Activated CD4-positive, alpha-beta T cell treated with anti-CD3 and anti-CD28 coated beads for 36 hours (primary cell): ENCODE measurements at regions of chr10 and their contacts with region 1.

Region 1: DNA sequence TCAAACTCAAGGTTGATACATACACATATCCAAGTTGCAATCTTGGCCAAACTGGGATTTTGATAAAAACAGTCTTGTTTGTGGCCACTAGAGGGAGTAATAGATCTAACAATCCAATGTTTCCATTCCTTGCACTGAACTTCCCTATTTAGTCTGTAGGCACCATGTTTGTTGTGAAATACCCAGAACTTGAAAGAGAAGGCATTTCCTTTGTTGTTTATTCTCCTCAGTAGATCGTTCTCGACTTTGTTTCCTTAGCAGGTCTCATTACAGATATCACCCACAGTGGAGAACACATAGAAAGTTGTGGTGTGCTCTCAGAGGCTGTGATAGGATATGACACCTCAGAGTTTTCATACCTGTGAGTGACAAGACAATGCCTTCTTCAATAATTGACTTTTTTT is 70.3 kb upstream of the MXI1 start:
- DNase-seq: no peak
- ATAC-seq: peak; percentile 78
- H3K4me3 Mint-ChIP-seq: no peak overlapping the region
- H3K27ac Mint-ChIP-seq: peak overlapping the region; percentile 7
- H3K4me1 Mint-ChIP-seq: peaks cover 34% of the 10 kb centered on the region
- H3K27me3 Mint-ChIP-seq: no peaks in the 10 kb centered on the region

Region 2: GRCh38 chr10:109698086-109698485 is 439.1 kb before region 1 on chr10:
- CTCF ChIA-PET with region 1: no interaction called
- POLR2A ChIA-PET with region 1: no interaction called
- intact Hi-C with region 1: no loop called
- DNase-seq: no peak
- ATAC-seq: no peak
- H3K4me3 Mint-ChIP-seq: no peak overlapping the region
- H3K27ac Mint-ChIP-seq: no peak overlapping the region
- H3K4me1 Mint-ChIP-seq: no peaks in the 10 kb centered on the region
- H3K27me3 Mint-ChIP-seq: no peaks in the 10 kb centered on the region

Region 3: GRCh38 chr10:109883859-109884771 is 253.0 kb before region 1 on chr10:
- CTCF ChIA-PET with region 1: interaction called, 7 read pairs
- POLR2A ChIA-PET with region 1: interaction called, 9 read pairs
- intact Hi-C with region 1: loop called (anchors 1 kb)
- DNase-seq: peak; percentile 73
- ATAC-seq: peak; percentile 71
- H3K4me3 Mint-ChIP-seq: no peak overlapping the region
- H3K27ac Mint-ChIP-seq: no peak overlapping the region
- H3K4me1 Mint-ChIP-seq: peaks cover 10% of the 10 kb centered on the region
- H3K27me3 Mint-ChIP-seq: no peaks in the 10 kb centered on the region

Region 4: DNA sequence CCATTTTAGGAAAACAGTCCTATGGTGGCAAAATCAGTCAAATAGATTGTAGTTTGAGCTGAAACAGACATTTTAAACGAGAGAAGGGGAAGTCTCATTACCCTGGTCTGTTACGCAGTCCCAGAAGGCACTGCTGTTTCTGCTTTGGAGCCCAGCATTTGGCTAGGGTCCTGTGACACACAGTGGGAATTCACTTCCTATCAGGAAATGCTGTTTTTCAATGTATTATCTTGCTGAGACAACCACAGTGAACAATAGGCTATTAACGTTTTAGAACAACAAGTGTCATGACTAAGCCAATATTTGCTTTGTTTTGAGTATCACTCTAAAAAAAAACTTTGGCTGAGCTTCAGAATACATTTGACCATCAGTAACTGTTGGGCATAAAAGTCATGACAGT is 55.2 kb before region 1 on chr10:
- CTCF ChIA-PET with region 1: interaction called, 5 read pairs
- POLR2A ChIA-PET with region 1: no interaction called
- intact Hi-C with region 1: loop called in 1 of 2 experiments (anchors 2 kb)
- DNase-seq: no peak
- ATAC-seq: no peak
- H3K4me3 Mint-ChIP-seq: peak overlapping the region; percentile 26
- H3K27ac Mint-ChIP-seq: peak overlapping the region; percentile 88
- H3K4me1 Mint-ChIP-seq: peaks cover 89% of the 10 kb centered on the region
- H3K27me3 Mint-ChIP-seq: no peaks in the 10 kb centered on the region

Region 5: DNA sequence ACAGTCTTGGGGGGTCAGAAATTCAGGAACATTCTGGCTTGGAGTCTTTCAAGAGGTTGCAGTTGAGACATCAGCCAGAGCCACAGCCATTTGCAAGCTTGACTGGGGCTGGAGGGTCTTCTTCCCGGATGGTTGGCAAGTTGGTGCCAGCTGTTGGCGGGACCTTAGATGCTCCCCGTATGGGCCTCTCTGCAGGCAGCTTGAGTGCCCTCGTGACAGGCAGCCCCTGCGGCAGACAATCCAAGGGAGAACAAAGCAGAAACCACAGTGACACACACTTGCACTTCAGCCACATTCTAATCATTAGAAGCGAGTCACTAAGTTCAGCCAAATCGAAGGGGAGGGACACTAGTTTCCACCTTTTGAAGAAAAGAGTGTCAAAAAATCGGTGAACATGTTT is 10.8 kb after region 1 on chr10:
- CTCF ChIA-PET with region 1: interaction called, 11 read pairs
- POLR2A ChIA-PET with region 1: no interaction called
- intact Hi-C with region 1: no loop called
- DNase-seq: no peak
- ATAC-seq: peak; percentile 57
- H3K4me3 Mint-ChIP-seq: no peak overlapping the region
- H3K27ac Mint-ChIP-seq: no peak overlapping the region
- H3K4me1 Mint-ChIP-seq: peaks cover 8% of the 10 kb centered on the region
- H3K27me3 Mint-ChIP-seq: peaks cover 18% of the 10 kb centered on the region

Region 6: GRCh38 chr10:110225756-110226542 is 88.8 kb after region 1 on chr10:
- CTCF ChIA-PET with region 1: interaction called, 18 read pairs
- POLR2A ChIA-PET with region 1: no interaction called
- intact Hi-C with region 1: loop called (anchors 1 kb)
- DNase-seq: peak; percentile 94
- ATAC-seq: peak; percentile 48
- H3K4me3 Mint-ChIP-seq: peak overlapping the region; percentile 95
- H3K27ac Mint-ChIP-seq: peak overlapping the region; percentile 95
- H3K4me1 Mint-ChIP-seq: peaks cover 44% of the 10 kb centered on the region
- H3K27me3 Mint-ChIP-seq: no peaks in the 10 kb centered on the region

Region 7: GRCh38 chr10:110279407-110279986 is 142.4 kb after region 1 on chr10:
- CTCF ChIA-PET with region 1: interaction called, 52 read pairs
- POLR2A ChIA-PET with region 1: interaction called, 3 read pairs
- intact Hi-C with region 1: loop called (anchors 1 kb)
- DNase-seq: peak; percentile 60
- ATAC-seq: peak; percentile 51
- H3K4me3 Mint-ChIP-seq: no peak overlapping the region
- H3K27ac Mint-ChIP-seq: no peak overlapping the region
- H3K4me1 Mint-ChIP-seq: peaks cover 23% of the 10 kb centered on the region
- H3K27me3 Mint-ChIP-seq: no peaks in the 10 kb centered on the region

Region 8: DNA sequence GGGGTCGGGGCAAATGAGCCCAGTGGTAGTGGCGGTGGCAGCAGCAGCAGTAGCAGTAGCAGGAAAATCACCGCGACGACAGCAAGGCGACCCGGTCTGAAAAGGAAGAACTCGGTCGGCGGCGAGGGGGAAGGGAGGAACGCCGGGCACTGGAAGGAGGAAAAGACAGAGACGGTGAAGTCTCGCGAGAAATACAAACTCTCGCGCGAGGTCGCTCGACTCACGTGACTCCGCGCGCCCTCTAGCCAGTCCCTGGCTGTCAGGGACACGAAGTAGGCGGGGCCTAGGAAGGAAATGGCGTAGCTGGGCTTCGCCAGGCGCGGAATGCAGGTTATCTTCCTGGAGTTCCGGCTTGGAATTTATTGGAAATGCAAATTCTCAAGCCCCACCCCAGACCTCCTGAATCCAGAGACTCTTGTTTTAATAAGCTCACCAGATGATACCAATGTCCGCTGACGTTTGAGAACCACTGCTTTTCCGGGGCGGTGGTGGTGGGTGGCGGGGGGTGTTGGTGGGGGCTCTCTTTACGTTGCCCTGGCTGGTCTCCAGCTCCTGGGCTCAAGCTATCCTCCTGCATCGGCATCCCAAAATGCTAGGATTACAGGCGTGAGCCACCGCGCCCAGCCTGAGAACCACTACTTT is 167.8 kb after region 1 on chr10 and contains the start of gene SMNDC1:
- CTCF ChIA-PET with region 1: interaction called, 7 read pairs
- POLR2A ChIA-PET with region 1: no interaction called
- intact Hi-C with region 1: loop called (anchors 1 to 2 kb)
- DNase-seq: peak; percentile 98
- ATAC-seq: peak; percentile 93
- H3K4me3 Mint-ChIP-seq: peak within 1 kb of the TSS; percentile 95
- H3K27ac Mint-ChIP-seq: peak within 1 kb of the TSS; percentile 98
- H3K4me1 Mint-ChIP-seq: peaks cover 42% of the 10 kb centered on the region
- H3K27me3 Mint-ChIP-seq: no peaks in the 10 kb centered on the region
- total RNA-seq, gene SMNDC1: 44.2 to 56.7 TPM